Esophagus muscularis mucosa (tissue), 4 donors: ENCODE measurements at regions of chr14 and their contacts with region 1.

Region 1: GRCh38 chr14:68137704-68138619 is 318.4 kb downstream of the RAD51B start:
- DNase-seq: no peak
- H3K4me3 ChIP-seq: no peak overlapping the region
- H3K27ac ChIP-seq: peak overlapping the region; percentile 64 to 91 (median 86)
- H3K4me1 ChIP-seq: peaks cover 31 to 71% (median 59%) of the 10 kb centered on the region in 4 donors
- H3K27me3 ChIP-seq: no peaks in the 10 kb centered on the region
- CTCF ChIP-seq: no peak
- EP300 ChIP-seq: no peak
- POLR2A ChIP-seq: no peak

Region 2: GRCh38 chr14:67467179-67468080 is 670.5 kb before region 1 on chr14:
- intact Hi-C with region 1: no loop called
- DNase-seq: no peak
- H3K4me3 ChIP-seq: no peak overlapping the region
- H3K27ac ChIP-seq: no peak overlapping the region
- H3K4me1 ChIP-seq: no peaks in the 10 kb centered on the region
- H3K27me3 ChIP-seq: no peaks in the 10 kb centered on the region
- CTCF ChIP-seq: no peak
- EP300 ChIP-seq: no peak
- POLR2A ChIP-seq: no peak

Region 3: DNA sequence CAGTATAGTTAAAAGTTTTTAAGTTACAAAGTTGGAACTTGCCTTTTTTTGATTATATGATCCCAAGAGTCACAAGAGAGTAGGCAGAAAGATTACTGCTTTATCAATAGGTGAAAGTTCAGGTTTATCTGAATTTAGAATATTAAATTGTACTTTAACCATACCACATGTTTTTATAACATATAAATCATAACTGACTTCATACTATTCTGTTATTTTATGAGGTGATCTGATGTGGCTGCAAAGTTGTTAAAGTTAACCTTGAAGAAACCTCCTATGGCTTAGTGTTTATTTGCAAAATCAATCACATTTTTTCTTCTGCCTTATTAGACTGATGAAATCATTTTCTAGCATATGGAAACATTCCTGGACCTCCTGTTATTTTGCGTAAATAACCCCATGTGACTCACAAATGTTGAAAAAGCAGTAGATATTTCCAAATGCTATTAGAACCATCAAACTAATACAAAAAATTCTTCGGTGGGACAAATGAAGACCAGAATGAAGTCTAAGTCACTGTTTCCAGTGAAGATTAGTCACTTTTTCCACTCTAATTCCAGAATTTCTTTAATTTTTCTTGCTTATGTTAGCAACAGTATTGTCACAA is 186.3 kb before region 1 on chr14:
- intact Hi-C with region 1: loop called (anchors 10 kb)
- DNase-seq: no peak
- H3K4me3 ChIP-seq: no peak overlapping the region
- H3K27ac ChIP-seq: no peak overlapping the region
- H3K4me1 ChIP-seq: peaks cover 0 to 6% (median 2%) of the 10 kb centered on the region in 4 donors
- H3K27me3 ChIP-seq: no peaks in the 10 kb centered on the region
- CTCF ChIP-seq: no peak
- EP300 ChIP-seq: no peak
- POLR2A ChIP-seq: no peak

Region 4: DNA sequence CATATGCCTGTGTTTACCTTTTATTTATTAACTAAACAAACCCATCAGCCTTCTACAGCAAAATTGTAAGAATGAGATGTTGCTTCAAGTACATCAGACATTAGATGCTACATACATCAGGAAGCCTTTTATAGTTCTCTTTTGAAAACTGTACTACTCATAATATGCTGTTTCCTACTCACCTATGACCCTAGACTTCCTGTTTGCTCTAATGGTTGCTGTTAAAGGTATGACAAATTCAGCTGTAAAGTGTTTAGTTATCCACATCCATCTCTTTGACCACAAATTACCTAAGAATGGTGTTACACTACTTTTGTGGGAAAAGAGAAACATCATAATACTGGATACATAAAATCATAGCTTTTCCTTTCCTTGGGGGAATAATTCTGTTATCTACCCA is 98.4 kb before region 1 on chr14:
- intact Hi-C with region 1: loop called (anchors 10 kb)
- DNase-seq: no peak
- H3K4me3 ChIP-seq: no peak overlapping the region
- H3K27ac ChIP-seq: peak overlapping the region in 3 of 4 donors; percentile 37 to 87 (median 83)
- H3K4me1 ChIP-seq: peaks cover 13 to 63% (median 59%) of the 10 kb centered on the region in 4 donors
- H3K27me3 ChIP-seq: no peaks in the 10 kb centered on the region
- CTCF ChIP-seq: no peak
- EP300 ChIP-seq: no peak
- POLR2A ChIP-seq: no peak

Region 5: GRCh38 chr14:68685419-68686204 is 547.6 kb after region 1 on chr14:
- intact Hi-C with region 1: loop called (anchors 10 kb)
- DNase-seq: no peak
- H3K4me3 ChIP-seq: no peak overlapping the region
- H3K27ac ChIP-seq: peak overlapping the region; percentile 81 to 89 (median 85)
- H3K4me1 ChIP-seq: peaks cover 51 to 92% (median 84%) of the 10 kb centered on the region in 4 donors
- H3K27me3 ChIP-seq: no peaks in the 10 kb centered on the region
- CTCF ChIP-seq: no peak
- EP300 ChIP-seq: peak; percentile 53
- POLR2A ChIP-seq: no peak

Region 6: GRCh38 chr14:68788996-68789820 is 651.2 kb after region 1 on chr14:
- intact Hi-C with region 1: loop called (anchors 10 kb)
- DNase-seq: no peak
- H3K4me3 ChIP-seq: peak overlapping the region; percentile 83 to 95 (median 87)
- H3K27ac ChIP-seq: peak overlapping the region; percentile 99 to 100 (median 100)
- H3K4me1 ChIP-seq: peaks cover 15 to 51% (median 42%) of the 10 kb centered on the region in 4 donors
- H3K27me3 ChIP-seq: peaks cover 0 to 4% (median 0%) of the 10 kb centered on the region in 4 donors
- CTCF ChIP-seq: peak; percentile 72 to 82 (median 73)
- EP300 ChIP-seq: no peak
- POLR2A ChIP-seq: peak; percentile 9